CD4-positive, alpha-beta memory T cell (primary cell): ENCODE measurements at regions of chr16 and their contacts with region 1.

Region 1: GRCh38 chr16:68328151-68328859 is 17.5 kb downstream of the PRMT7 start:
- DNase-seq: peak; percentile 77 to 83 (median 78)
- H3K4me3 ChIP-seq: no peak overlapping the region
- H3K4me3 Mint-ChIP-seq: no peak overlapping the region
- H3K27ac ChIP-seq: no peak overlapping the region
- H3K27ac Mint-ChIP-seq: peak overlapping the region; percentile 5 to 88 (median 19)
- H3K4me1 ChIP-seq: peaks cover 16% of the 10 kb centered on the region
- H3K4me1 Mint-ChIP-seq: peaks cover 8 to 19% (median 14%) of the 10 kb centered on the region in 4 donors
- H3K27me3 ChIP-seq: no peaks in the 10 kb centered on the region
- H3K27me3 Mint-ChIP-seq: no peaks in the 10 kb centered on the region

Region 2: DNA sequence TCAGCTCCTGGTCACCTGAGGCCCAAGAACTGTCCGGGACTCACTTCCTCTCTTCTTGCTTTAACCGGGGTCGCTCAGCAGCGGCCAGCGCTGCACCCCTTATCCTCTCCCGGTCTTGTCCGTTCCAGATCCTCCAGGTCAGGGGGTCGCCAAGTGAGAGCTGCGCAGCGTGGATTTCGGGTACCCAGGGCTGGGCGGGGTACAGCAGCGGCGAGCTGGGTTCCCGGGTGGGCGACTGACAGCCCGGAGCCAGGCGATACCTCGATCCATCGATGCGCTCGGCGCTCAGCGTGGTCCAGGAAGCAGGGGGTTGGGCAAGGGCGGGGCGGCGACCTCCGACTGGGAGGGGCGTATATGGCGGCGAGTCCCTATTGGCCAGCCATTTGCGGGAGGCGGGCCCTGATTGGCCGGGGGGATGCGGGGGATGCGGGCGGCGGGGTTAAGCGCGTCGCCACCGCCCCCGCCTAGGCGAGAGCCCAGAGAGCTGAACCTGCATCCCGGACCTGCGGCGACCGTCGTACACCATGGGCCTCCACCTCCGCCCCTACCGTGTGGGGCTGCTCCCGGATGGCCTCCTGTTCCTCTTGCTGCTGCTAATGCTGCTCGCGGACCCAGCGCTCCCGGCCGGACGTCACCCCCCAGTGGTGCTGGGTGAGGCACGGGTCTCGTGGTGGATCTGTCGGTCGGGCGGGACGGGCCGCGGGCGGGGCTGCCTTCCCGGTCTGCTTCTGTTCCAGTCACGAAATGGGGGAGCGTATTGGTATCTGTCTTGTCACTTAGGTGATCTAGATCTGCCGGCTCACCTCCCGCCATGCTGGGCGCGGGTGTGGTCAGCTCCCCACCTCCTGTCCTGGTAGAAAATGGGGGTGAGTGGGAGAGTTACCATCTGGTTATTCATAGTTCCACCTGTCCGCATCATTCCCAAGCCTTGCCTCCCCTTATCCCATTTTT is 83.1 kb before region 1 on chr16 and contains the start of gene PLA2G15:
- CTCF ChIA-PET with region 1: interaction called, 41 read pairs
- POLR2A ChIA-PET with region 1: interaction called, 4 read pairs
- intact Hi-C with region 1: loop called (anchors 1 kb)
- DNase-seq: peak; percentile 93 to 96 (median 94)
- H3K4me3 ChIP-seq: peak within 1 kb of the TSS; percentile 91 to 98
- H3K4me3 Mint-ChIP-seq: peak within 1 kb of the TSS; percentile 93 to 99 (median 98)
- H3K27ac ChIP-seq: peak within 1 kb of the TSS; percentile 58
- H3K27ac Mint-ChIP-seq: peak within 1 kb of the TSS; percentile 77 to 95 (median 93)
- H3K4me1 ChIP-seq: peaks cover 27% of the 10 kb centered on the region
- H3K4me1 Mint-ChIP-seq: peaks cover 15 to 31% (median 20%) of the 10 kb centered on the region in 4 donors
- H3K27me3 ChIP-seq: no peaks in the 10 kb centered on the region
- H3K27me3 Mint-ChIP-seq: no peaks in the 10 kb centered on the region
- total RNA-seq, gene PLA2G15: 12.0 to 13.3 TPM

Region 3: DNA sequence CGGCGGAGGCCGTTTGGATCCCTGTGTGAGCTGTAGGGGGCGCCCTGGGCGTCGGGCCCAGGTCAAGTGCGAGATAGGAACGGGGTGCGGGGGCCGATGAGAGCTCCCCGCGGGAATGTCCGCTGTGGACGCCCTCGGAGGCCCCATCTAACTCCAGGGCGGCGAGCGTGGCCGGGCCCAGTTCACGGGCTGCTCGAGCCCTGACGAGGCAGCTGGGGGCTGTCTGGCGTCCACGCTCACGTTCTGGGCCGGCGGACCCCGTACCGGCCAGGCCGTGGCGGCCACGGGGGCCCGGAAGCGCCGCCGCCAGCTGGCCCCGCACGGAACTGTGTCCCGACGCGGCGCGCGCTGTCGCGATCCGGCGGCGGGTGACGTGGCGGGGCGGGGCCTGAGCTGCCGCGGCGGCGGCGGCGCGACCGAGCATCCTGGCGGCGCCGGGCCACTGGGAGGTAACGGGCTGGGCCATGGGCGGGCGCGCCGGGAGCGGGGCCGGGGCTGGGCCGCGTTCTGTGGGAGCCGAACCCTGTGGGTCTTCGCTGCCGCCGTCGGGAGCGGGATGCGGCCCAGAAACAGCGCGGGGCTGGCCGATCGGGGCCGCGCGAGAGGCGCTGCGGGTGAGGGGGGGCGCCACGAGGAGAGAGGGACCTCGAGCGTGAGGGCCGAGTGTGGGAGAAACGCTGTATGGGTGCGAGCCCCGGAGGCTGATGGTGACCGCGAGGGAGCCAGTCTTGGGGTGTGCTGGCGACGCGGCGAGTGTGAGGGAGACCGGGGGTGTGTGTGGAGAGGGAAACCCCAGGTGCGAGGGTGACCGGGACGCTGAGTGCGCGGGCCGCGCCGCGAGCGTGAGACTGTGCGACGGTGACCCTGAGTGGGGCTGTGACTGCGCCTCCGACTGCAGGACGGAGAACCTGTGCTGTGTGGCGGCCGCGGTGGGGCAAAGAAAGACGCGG is 63.9 kb before region 1 on chr16 and contains the start of gene SLC7A6:
- CTCF ChIA-PET with region 1: interaction called, 575 read pairs
- POLR2A ChIA-PET with region 1: interaction called, 70 read pairs
- intact Hi-C with region 1: loop called (anchors 1 kb)
- DNase-seq: peak; percentile 79 to 86 (median 85)
- H3K4me3 ChIP-seq: peak within 1 kb of the TSS; percentile 68 to 93
- H3K4me3 Mint-ChIP-seq: peak within 1 kb of the TSS; percentile 94 to 99 (median 97)
- H3K27ac ChIP-seq: peak within 1 kb of the TSS; percentile 97
- H3K27ac Mint-ChIP-seq: peak within 1 kb of the TSS; percentile 98 to 100 (median 99)
- H3K4me1 ChIP-seq: peaks cover 58% of the 10 kb centered on the region
- H3K4me1 Mint-ChIP-seq: peaks cover 30 to 67% (median 50%) of the 10 kb centered on the region in 4 donors
- H3K27me3 ChIP-seq: no peaks in the 10 kb centered on the region
- H3K27me3 Mint-ChIP-seq: no peaks in the 10 kb centered on the region
- total RNA-seq, gene SLC7A6: 190 to 194 TPM

Region 4: GRCh38 chr16:68283801-68284598 is 44.3 kb before region 1 on chr16:
- CTCF ChIA-PET with region 1: interaction called, 32 read pairs
- POLR2A ChIA-PET with region 1: interaction called, 5 read pairs
- intact Hi-C with region 1: no loop called
- DNase-seq: no peak
- H3K4me3 ChIP-seq: peak overlapping the region in 1 of 2 donors; percentile 57
- H3K4me3 Mint-ChIP-seq: peak overlapping the region; percentile 71 to 91 (median 87)
- H3K27ac ChIP-seq: peak overlapping the region; percentile 54
- H3K27ac Mint-ChIP-seq: peak overlapping the region; percentile 82 to 94 (median 91)
- H3K4me1 ChIP-seq: peaks cover 100% of the 10 kb centered on the region
- H3K4me1 Mint-ChIP-seq: peaks cover 65 to 97% (median 84%) of the 10 kb centered on the region in 4 donors
- H3K27me3 ChIP-seq: no peaks in the 10 kb centered on the region
- H3K27me3 Mint-ChIP-seq: no peaks in the 10 kb centered on the region

Region 5: GRCh38 chr16:68298907-68299561 is 29.3 kb before region 1 on chr16:
- CTCF ChIA-PET with region 1: interaction called, 19 read pairs
- POLR2A ChIA-PET with region 1: no interaction called
- intact Hi-C with region 1: no loop called
- DNase-seq: no peak
- H3K4me3 ChIP-seq: no peak overlapping the region
- H3K4me3 Mint-ChIP-seq: no peak overlapping the region
- H3K27ac ChIP-seq: no peak overlapping the region
- H3K27ac Mint-ChIP-seq: peak overlapping the region in 5 of 7 donors; percentile 14 to 78 (median 29)
- H3K4me1 ChIP-seq: no peaks in the 10 kb centered on the region
- H3K4me1 Mint-ChIP-seq: peaks cover 12 to 28% (median 18%) of the 10 kb centered on the region in 4 donors
- H3K27me3 ChIP-seq: no peaks in the 10 kb centered on the region
- H3K27me3 Mint-ChIP-seq: no peaks in the 10 kb centered on the region

Region 6: DNA sequence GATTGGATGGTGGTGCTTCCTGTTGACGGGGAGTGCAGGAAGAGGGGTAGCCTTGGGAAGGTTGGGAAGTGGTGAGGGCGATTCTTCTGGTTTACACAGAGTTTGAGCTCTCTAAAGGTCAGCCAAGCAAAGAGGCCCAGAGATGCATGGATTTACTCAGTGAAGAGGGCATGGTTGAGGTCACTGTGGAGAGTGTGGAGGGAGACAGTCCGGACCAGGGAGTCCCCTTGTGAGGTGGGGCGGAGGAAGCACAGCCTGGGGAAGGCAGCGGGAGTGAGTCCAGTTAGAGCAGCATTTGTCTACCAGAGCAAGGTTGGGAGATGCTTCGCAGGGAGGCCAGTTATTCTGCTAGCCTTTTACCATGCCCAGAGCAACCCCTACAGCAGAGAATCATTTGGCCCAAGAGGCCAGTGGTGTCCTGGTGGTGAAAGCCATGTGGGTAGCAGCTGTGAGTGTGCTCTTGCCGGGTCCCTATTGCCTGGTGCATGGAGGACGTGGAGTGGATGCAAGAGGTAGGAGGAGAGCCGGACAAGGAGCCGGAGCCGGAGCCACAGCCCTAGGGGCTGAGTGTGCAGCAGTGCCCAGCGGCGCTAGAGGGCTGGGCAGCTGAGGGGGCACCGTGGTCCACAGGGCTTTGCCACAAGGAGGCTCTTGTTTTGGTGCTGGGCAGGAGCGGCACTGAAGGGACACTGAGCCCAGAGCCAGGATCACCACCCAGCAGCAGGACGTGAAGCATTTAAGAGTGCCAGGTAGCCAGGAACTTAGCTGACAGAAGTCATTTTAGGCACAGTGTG is 10.2 kb after region 1 on chr16:
- CTCF ChIA-PET with region 1: interaction called, 23 read pairs
- POLR2A ChIA-PET with region 1: no interaction called
- intact Hi-C with region 1: no loop called
- DNase-seq: no peak
- H3K4me3 ChIP-seq: no peak overlapping the region
- H3K4me3 Mint-ChIP-seq: no peak overlapping the region
- H3K27ac ChIP-seq: no peak overlapping the region
- H3K27ac Mint-ChIP-seq: peak overlapping the region in 1 of 7 donors; percentile 78
- H3K4me1 ChIP-seq: no peaks in the 10 kb centered on the region
- H3K4me1 Mint-ChIP-seq: peaks cover 0 to 4% (median 2%) of the 10 kb centered on the region in 4 donors
- H3K27me3 ChIP-seq: no peaks in the 10 kb centered on the region
- H3K27me3 Mint-ChIP-seq: no peaks in the 10 kb centered on the region

Region 7: GRCh38 chr16:68469796-68470460 is 141.6 kb after region 1 on chr16:
- CTCF ChIA-PET with region 1: no interaction called
- POLR2A ChIA-PET with region 1: no interaction called
- intact Hi-C with region 1: no loop called
- DNase-seq: peak in 1 of 5 donors; percentile 10
- H3K4me3 ChIP-seq: peak overlapping the region; percentile 22 to 58
- H3K4me3 Mint-ChIP-seq: peak overlapping the region; percentile 70 to 96 (median 85)
- H3K27ac ChIP-seq: peak overlapping the region; percentile 20
- H3K27ac Mint-ChIP-seq: peak overlapping the region; percentile 25 to 95 (median 85)
- H3K4me1 ChIP-seq: peaks cover 40% of the 10 kb centered on the region
- H3K4me1 Mint-ChIP-seq: peaks cover 26 to 48% (median 37%) of the 10 kb centered on the region in 4 donors
- H3K27me3 ChIP-seq: no peaks in the 10 kb centered on the region
- H3K27me3 Mint-ChIP-seq: no peaks in the 10 kb centered on the region

Region 8: DNA sequence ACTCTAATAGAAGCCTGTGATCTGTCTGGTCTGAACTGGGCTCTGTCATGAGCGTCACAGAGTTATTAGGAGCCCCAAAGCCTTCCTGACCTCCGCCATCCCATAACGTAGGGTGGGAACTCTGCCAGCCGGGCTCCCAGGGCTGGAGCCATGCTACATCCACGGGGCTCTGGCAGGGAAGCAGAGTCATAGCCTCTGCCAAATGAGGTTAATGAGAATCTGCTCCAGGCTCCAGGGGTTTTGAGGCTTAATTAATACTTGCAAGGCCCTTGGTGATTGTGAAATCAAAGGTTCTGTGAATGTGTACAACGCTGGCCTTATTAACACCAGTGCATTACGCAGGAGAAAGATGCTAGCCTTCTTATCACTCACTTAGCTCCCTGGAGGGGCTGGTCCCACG is 168.4 kb after region 1 on chr16:
- CTCF ChIA-PET with region 1: no interaction called
- POLR2A ChIA-PET with region 1: no interaction called
- intact Hi-C with region 1: no loop called
- DNase-seq: no peak
- H3K4me3 ChIP-seq: no peak overlapping the region
- H3K4me3 Mint-ChIP-seq: no peak overlapping the region
- H3K27ac ChIP-seq: no peak overlapping the region
- H3K27ac Mint-ChIP-seq: no peak overlapping the region
- H3K4me1 ChIP-seq: no peaks in the 10 kb centered on the region
- H3K4me1 Mint-ChIP-seq: peaks cover 0 to 2% (median 0%) of the 10 kb centered on the region in 4 donors
- H3K27me3 ChIP-seq: no peaks in the 10 kb centered on the region
- H3K27me3 Mint-ChIP-seq: no peaks in the 10 kb centered on the region